H1 (cell line): ENCODE measurements at regions of chr3 and their contacts with region 1.

Region 1: GRCh38 chr3:24088782-24089181 is 143.7 kb downstream of the NR1D2 start:
- DNase-seq: no peak
- H3K4me3 ChIP-seq: no peak overlapping the region
- H3K27ac ChIP-seq: no peak overlapping the region
- H3K4me1 ChIP-seq: no peaks in the 10 kb centered on the region
- H3K27me3 ChIP-seq: no peaks in the 10 kb centered on the region
- CTCF ChIP-seq: peak in 2 of 3 experiments; percentile 52 to 54; a peak in 3 of 4 replicates
- EP300 ChIP-seq: no peak
- POLR2A ChIP-seq: no peak
- RAD21 ChIP-seq: peak; percentile 65 to 72

Region 2: DNA sequence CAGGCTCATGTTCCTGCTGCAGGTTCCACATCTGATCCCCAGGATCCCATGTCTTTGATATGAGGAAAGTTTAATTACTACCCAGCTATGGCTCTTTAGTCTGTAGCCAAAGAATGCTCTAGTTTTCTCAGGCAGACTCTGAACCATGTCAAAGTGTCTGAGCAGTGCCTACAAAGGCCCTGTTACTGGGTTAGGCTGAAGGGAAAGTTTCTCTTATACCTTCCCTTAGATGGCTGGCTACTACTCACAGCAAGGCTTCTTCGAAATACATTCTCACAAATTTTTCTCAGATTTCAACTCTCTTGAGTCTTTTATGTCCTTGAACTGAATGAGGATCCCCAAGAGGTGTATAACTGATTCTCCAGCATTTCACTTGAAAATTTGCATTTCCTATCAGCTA is 41.3 kb before region 1 on chr3:
- CTCF ChIA-PET with region 1: interaction called, 10 read pairs
- POLR2A ChIA-PET with region 1: no interaction called
- DNase-seq: no peak
- H3K4me3 ChIP-seq: no peak overlapping the region
- H3K27ac ChIP-seq: no peak overlapping the region
- H3K4me1 ChIP-seq: no peaks in the 10 kb centered on the region
- H3K27me3 ChIP-seq: no peaks in the 10 kb centered on the region; a peak in 1 of 7 replicates
- CTCF ChIP-seq: no peak
- EP300 ChIP-seq: no peak
- POLR2A ChIP-seq: no peak
- RAD21 ChIP-seq: no peak

Region 3: DNA sequence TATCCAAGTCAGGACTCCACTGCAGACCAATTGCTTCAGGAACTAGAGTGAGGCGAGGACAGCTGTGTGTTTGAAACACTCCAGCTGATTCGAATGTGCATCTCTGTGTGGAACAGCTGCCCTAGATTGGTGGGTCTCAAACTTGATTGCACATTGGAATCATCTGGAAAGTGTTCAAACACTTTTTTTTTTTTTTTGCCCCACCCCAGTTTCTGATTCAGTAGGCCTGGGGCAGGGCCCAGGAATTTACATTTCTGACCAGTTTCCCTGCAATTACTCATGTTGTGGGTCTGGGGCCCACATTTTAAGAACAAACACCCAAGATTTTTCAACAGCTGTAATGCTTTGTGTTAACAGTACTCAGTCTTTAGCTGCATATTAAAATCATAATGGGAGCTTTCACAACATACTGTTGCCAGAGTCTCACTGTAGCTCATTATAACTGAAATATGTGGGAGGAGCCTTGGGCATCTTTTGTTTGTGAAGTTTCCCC is 12.9 kb after region 1 on chr3:
- CTCF ChIA-PET with region 1: interaction called, 10 read pairs
- POLR2A ChIA-PET with region 1: no interaction called
- DNase-seq: no peak
- H3K4me3 ChIP-seq: no peak overlapping the region
- H3K27ac ChIP-seq: no peak overlapping the region
- H3K4me1 ChIP-seq: peaks cover 0 to 5% (median 2%) of the 10 kb centered on the region in 4 experiments; a peak in 3 of 7 replicates
- H3K27me3 ChIP-seq: no peaks in the 10 kb centered on the region
- CTCF ChIP-seq: no peak
- EP300 ChIP-seq: no peak
- POLR2A ChIP-seq: no peak
- RAD21 ChIP-seq: no peak

Region 4: DNA sequence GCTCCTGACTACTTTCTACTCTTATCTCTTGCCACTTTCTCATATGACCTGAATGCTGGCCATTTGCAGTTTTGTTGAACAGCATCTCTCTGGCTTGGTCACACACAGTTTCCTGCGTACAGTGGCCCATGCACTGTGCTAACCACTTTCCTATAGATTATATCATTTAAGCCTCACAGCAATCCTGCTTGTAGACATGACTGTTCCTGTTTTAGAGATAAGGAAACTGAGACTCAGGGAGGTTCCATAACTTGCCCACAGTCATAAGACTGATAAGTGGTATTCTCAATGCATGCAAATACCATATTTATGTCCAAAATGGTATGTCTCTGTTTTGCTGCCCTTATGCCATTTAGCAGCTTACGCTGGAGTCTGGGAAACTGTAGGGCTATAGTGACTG is 85.8 kb after region 1 on chr3:
- CTCF ChIA-PET with region 1: interaction called, 10 read pairs
- POLR2A ChIA-PET with region 1: no interaction called
- DNase-seq: no peak
- H3K4me3 ChIP-seq: no peak overlapping the region
- H3K27ac ChIP-seq: no peak overlapping the region
- H3K4me1 ChIP-seq: peaks cover 0 to 8% (median 5%) of the 10 kb centered on the region in 4 experiments; a peak in 2 of 7 replicates
- H3K27me3 ChIP-seq: no peaks in the 10 kb centered on the region
- CTCF ChIP-seq: no peak
- EP300 ChIP-seq: no peak
- POLR2A ChIP-seq: no peak
- RAD21 ChIP-seq: no peak